ENCODE measurements at regions of chr17 and their contacts with region 1.

Region 1: DNA sequence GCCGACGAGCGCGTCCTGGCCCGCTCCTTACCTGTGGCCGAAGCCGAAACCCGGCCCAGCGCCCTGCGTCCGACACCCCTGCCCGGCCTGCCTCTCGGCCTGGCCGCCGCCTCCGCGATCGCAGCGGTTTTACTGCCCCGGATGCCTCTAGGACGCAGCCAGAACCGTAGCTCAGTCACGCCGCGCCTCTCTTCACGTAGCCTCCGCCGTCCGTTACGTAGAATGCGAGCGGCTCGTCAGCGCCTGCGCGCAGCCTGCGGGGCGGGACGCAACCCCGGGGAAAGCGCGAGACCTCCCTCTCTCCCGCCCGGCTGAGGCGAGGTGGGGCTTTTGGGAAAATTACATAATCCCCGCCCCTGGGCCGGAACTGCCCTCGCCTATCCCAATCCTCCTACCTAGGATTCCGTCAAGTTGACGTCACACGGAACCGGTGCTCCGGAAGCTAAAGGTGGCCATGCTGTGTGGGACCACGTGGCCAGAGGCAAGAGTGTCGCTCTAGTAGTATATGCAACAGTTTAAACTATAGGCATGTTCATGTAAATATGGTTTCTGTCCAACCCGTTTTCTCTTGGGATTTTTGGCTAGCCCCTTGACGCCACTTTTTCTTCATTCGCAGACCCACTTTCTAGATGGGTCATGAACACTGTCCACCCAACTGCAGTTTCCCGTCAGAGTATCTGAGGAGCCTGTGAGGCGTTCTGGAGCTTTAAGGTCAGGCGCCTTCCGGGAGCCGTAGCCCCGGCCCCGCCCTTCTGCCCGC is at the start of gene CCDC47:
- DNase-seq: peak; percentile 96 to 99
- H3K4me3 ChIP-seq: peak within 1 kb of the TSS; percentile 89 to 97
- H3K27ac ChIP-seq: peak within 1 kb of the TSS; percentile 97 to 98
- H3K4me1 ChIP-seq: peaks cover 4 to 25% of the 10 kb centered on the region in 2 donors
- H3K27me3 ChIP-seq: no peaks in the 10 kb centered on the region
- CTCF ChIP-seq: no peak
- total RNA-seq, gene CCDC47: 76.2 TPM

Region 2: DNA sequence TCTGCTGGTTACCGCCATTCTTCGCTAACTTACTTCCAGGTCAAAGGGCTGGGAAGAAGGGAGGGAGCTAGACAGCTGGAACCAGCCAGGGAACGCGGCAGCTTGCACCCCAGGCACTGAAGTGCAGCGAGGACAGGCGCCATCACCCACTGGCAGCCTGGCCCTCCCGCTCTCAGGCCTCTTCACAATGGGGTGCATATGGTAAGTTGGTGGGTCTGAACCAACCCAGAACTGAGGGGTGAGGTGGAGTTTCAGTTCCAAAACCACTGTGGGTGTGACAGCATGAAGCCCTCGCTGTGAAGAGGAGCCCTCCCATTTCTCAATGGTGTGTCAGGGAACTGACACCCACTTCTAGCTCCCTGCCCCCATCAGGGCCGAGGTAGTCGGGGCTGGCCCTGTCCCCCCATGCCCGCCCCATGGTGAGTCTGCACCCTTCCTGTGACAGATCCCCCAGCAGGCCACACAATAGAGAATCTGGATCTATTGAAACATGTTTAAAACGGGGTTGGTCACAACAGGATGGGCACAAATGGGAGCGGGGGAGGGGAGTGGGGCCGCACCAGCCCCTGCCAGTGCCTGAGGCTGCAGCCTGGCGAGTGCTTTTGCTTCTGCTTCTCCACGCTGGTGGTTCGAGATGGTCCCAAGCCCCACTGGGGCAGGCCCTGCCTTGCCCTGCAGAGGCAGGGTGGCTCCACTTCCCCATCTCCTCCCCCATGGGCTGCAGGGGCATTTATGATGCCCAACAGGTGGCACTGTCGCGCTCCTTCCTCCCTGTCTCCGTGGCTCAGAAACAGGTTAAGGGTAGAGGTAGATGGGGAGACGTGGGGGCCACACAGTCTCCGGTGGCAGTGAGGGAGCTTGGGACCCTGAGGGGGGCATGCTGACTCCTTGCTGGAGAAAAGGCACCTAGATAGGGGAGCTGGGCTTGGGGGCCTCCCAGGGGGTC is 75.9 kb before region 1 on chr17:
- intact Hi-C with region 1: loop called (anchors 2 kb)
- DNase-seq: peak in 1 of 2 donors; percentile 76
- H3K4me3 ChIP-seq: peak overlapping the region in 1 of 2 donors; percentile 73
- H3K27ac ChIP-seq: peak overlapping the region; percentile 54 to 80
- H3K4me1 ChIP-seq: peaks cover 6 to 9% of the 10 kb centered on the region in 2 donors
- H3K27me3 ChIP-seq: no peaks in the 10 kb centered on the region
- CTCF ChIP-seq: peak in 2 of 3 experiments; percentile 45

Region 3: GRCh38 chr17:63741221-63742049 is 32.1 kb before region 1 on chr17 and contains the start of gene STRADA:
- intact Hi-C with region 1: loop called (anchors 2 kb)
- DNase-seq: peak; percentile 94 to 99
- H3K4me3 ChIP-seq: peak within 1 kb of the TSS; percentile 84 to 90
- H3K27ac ChIP-seq: peak within 1 kb of the TSS; percentile 91 to 94
- H3K4me1 ChIP-seq: peaks cover 0 to 10% of the 10 kb centered on the region in 2 donors
- H3K27me3 ChIP-seq: no peaks in the 10 kb centered on the region
- CTCF ChIP-seq: no peak
- total RNA-seq, gene STRADA: 3.2 TPM

Region 4: GRCh38 chr17:63827002-63827771 is 53.6 kb after region 1 on chr17 and contains the starts of genes FTSJ3 and PSMC5:
- intact Hi-C with region 1: loop called (anchors 1 kb)
- DNase-seq: peak; percentile 78 to 97
- H3K4me3 ChIP-seq: peak within 1 kb of the TSS; percentile 66 to 90
- H3K27ac ChIP-seq: peak within 1 kb of the TSS; percentile 89 to 90
- H3K4me1 ChIP-seq: peaks cover 10 to 22% of the 10 kb centered on the region in 2 donors
- H3K27me3 ChIP-seq: no peaks in the 10 kb centered on the region
- CTCF ChIP-seq: peak; percentile 25 to 52 (median 40)
- total RNA-seq, gene FTSJ3: 18.2 TPM
- total RNA-seq, gene PSMC5: 83.7 TPM

Region 5: DNA sequence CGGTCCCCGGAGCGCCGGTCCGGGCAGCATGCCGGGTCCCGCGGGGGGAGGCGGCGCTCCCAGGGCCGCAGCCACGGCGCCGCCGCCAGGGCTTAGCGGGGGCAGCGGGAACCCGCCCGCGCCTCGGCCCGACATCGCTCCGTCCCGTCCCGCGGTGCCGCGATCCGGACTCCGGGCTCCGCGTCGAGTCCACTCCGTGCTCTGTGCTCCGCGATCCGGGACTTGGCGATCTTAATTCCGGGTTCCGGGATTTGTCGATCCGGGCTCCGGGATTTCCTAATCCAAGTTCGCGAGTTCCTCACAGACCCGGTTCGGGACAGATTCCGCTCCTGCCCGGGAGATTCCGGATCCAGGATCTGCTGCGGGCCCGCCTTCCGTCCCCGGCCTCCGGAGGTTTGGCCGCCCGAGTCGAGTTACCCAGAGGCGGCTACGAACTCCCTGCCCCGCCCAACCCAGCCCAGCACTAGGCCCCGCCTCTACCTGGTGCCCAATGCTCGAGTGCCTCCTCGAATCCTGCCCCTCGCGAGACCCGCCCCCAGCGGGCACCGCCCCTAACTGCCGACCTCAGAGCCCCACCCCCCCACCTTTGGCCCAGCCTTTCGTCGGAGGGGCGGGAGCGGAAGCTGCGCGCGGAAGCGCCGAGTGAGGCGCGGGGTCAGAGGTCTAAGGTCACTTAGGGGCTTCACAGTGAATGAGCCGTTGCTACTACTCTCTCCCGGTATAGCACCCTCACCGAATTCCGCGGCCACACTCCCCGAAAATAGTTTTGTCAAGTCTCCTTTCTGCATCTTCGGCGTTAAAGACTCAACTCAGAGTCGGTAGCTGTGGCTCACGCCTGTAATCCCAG is 69.2 kb after region 1 on chr17 and contains the start of gene SMARCD2:
- intact Hi-C with region 1: loop called (anchors 1 kb)
- DNase-seq: peak; percentile 92 to 99
- H3K4me3 ChIP-seq: peak within 1 kb of the TSS; percentile 83 to 98
- H3K27ac ChIP-seq: peak within 1 kb of the TSS; percentile 89 to 97
- H3K4me1 ChIP-seq: peaks cover 28 to 45% of the 10 kb centered on the region in 2 donors
- H3K27me3 ChIP-seq: no peaks in the 10 kb centered on the region
- CTCF ChIP-seq: peak in 1 of 3 experiments; percentile 9
- total RNA-seq, gene SMARCD2: 78.0 TPM

Region 6: GRCh38 chr17:64051153-64051552 is 277.6 kb after region 1 on chr17:
- intact Hi-C with region 1: no loop called
- DNase-seq: no peak
- H3K4me3 ChIP-seq: no peak overlapping the region
- H3K27ac ChIP-seq: no peak overlapping the region
- H3K4me1 ChIP-seq: no peaks in the 10 kb centered on the region
- H3K27me3 ChIP-seq: no peaks in the 10 kb centered on the region
- CTCF ChIP-seq: no peak

Region 7: DNA sequence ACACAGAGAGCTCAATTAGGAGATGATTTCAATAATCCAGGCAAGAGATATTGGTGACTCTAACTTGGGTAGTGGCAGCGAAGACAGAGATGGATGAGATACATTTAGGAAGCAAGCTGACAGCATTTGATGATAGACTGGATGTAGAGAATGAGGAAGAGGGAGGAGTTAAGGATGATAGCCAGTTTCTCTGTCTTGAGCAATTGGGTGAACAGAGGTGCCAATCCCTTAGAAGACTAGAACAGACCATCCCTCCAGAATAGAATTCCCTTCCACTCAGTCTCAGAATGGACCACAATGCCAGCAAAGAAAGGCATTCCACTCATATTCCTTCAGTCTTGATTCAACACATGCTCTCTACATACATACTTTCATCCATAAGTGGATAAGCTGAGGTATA is 706.1 kb after region 1 on chr17:
- intact Hi-C with region 1: no loop called
- DNase-seq: no peak
- H3K4me3 ChIP-seq: no peak overlapping the region
- H3K27ac ChIP-seq: no peak overlapping the region
- H3K4me1 ChIP-seq: no peaks in the 10 kb centered on the region
- H3K27me3 ChIP-seq: no peaks in the 10 kb centered on the region
- CTCF ChIP-seq: no peak

Region 8: DNA sequence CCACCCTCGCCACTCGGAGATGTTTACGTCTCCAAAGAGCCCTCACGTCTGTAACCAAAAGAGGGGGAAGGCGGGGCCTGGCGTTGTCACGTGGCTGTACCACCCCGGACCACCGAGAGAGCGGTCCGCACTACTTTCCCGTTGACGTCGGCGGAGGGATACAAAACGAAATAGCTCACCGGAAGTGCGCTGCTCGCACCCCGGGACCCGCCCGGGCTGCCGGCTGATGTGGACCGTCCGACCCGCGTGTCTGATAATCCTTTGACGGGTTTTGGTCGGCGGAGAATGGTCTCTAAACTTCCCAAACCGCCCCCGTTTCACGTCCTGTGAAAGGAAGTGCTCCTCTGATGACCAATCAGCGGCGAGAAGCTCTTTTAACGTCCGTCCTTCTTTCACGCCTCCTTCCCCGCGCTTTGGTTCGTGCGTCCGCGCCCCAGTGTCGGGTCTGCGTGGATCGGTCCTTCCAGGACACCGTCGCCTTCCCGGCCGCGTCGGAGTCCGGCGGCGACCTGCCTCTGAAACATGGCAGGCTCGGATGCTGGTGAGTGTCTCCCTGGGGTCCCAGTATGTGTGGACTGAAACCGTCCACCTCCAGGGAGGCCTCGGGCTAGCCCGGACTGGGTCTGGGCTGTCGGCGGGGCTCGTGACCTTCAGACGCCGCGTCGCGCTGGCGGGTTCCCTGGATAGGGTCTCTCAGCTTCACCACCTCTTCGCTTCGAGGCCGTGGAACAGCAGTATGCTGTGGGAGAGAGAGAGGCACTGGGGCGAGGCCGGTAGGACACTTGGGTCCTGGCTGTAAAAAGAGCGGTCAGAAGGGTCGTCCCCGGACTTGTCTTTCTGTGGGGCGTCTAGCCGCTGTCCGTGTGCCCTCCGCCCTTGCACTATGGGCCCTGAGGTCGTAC is 733.3 kb after region 1 on chr17 and contains the start of gene CEP95:
- intact Hi-C with region 1: loop called (anchors 2 kb)
- DNase-seq: peak; percentile 76 to 98
- H3K4me3 ChIP-seq: peak within 1 kb of the TSS; percentile 91 to 99
- H3K27ac ChIP-seq: peak within 1 kb of the TSS; percentile 99 to 100
- H3K4me1 ChIP-seq: peaks cover 10 to 41% of the 10 kb centered on the region in 2 donors
- H3K27me3 ChIP-seq: no peaks in the 10 kb centered on the region
- CTCF ChIP-seq: peak in 1 of 3 experiments; percentile 47
- total RNA-seq, gene CEP95: 6.9 TPM

Measured in ascending aorta (tissue), 2 donors.